K562 (cell line): ENCODE measurements at regions of chr11 and their contacts with region 1.

Region 1: GRCh38 chr11:78659326-78660270 is 84.9 kb upstream of the NARS2 start:
- DNase-seq: no peak
- ATAC-seq: no peak
- H3K4me3 ChIP-seq: no peak overlapping the region
- H3K27ac ChIP-seq: no peak overlapping the region
- H3K4me1 ChIP-seq: no peaks in the 10 kb centered on the region
- H3K27me3 ChIP-seq: peaks cover 5 to 50% of the 10 kb centered on the region in 2 experiments; a peak in 3 of 5 replicates
- CTCF ChIP-seq: no peak
- EP300 ChIP-seq: no peak
- POLR2A ChIP-seq: no peak
- RAD21 ChIP-seq: no peak

Region 2: GRCh38 chr11:78595436-78596130 is 64.0 kb before region 1 on chr11:
- CTCF ChIA-PET with region 1: no interaction called
- POLR2A ChIA-PET with region 1: no interaction called
- in situ Hi-C with region 1: no loop called
- intact Hi-C with region 1: no loop called
- DNase-seq: no peak
- ATAC-seq: no peak; the same call in 2 of the 3 replicates
- H3K4me3 ChIP-seq: no peak overlapping the region
- H3K27ac ChIP-seq: no peak overlapping the region
- H3K4me1 ChIP-seq: peaks cover 0 to 19% of the 10 kb centered on the region in 2 experiments; a peak in 2 of 5 replicates
- H3K27me3 ChIP-seq: 0 out of 5 replicates have a peak, but pooled peaks cover 0 to 4% of the 10 kb centered on the region in 2 experiments
- CTCF ChIP-seq: no peak
- EP300 ChIP-seq: no peak
- POLR2A ChIP-seq: no peak
- RAD21 ChIP-seq: no peak

Region 3: DNA sequence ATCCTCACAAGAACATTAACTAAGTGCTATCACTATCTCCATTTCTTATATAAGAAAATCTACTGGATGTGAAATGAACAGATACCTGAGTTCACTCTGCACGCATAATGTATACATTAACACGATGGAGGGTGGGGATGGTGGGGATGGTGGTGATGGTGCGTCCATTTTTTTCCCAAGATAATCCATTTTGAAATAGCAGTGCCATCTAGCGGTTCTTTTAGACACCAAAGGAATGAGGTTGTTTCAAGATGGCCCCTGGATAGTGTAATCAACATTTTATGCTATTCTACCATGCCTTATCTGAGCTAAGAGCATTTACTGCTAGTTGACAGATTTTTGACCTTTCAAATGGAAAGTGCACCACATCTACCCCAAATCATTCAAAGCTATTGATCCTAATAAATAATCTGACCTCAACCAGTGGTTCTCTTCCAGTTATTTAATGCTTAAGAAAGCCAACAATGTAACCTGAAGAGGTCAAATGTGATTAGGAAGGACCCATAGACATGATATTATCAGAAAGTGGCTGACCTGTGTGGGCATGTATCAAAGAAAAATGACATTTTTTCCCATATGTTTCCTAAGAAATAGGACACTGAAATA is 1495.9 kb after region 1 on chr11:
- CTCF ChIA-PET with region 1: no interaction called
- POLR2A ChIA-PET with region 1: no interaction called
- in situ Hi-C with region 1: loop called (anchors 10 kb)
- intact Hi-C with region 1: no loop called
- DNase-seq: peak; percentile 5 to 31 (median 19)
- ATAC-seq: no peak
- H3K4me3 ChIP-seq: no peak overlapping the region
- H3K27ac ChIP-seq: no peak overlapping the region
- H3K4me1 ChIP-seq: no peaks in the 10 kb centered on the region
- H3K27me3 ChIP-seq: no peaks in the 10 kb centered on the region
- CTCF ChIP-seq: peak in 2 of 3 experiments; percentile 25 to 37; a peak in 2 of 6 replicates
- EP300 ChIP-seq: no peak
- POLR2A ChIP-seq: no peak
- RAD21 ChIP-seq: peak in 1 of 2 experiments; percentile 22; a peak in 2 of 4 replicates